Posterior cingulate gyrus (tissue), 11 donors: ENCODE measurements at regions of chr13 and their contacts with region 1.

Region 1: DNA sequence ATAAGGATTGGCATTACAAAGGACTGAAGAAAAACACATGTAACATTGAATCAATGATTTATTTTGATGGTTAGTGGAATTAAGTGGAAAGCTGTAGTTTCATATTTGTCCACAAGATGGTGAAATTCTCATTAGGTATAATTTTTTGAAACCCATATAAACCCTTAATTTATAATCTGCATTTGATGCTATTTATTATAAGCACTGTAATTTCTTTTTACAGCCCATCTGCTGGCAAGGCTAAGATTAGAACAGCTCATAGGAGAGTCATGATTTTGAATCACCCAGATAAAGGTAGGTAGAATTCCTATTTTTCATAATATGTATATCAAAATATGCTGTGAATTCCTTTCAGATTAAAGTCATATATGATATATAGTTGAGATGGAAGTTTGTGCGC is 62.2 kb downstream of the DNAJC15 start:
- DNase-seq: no peak

Region 2: DNA sequence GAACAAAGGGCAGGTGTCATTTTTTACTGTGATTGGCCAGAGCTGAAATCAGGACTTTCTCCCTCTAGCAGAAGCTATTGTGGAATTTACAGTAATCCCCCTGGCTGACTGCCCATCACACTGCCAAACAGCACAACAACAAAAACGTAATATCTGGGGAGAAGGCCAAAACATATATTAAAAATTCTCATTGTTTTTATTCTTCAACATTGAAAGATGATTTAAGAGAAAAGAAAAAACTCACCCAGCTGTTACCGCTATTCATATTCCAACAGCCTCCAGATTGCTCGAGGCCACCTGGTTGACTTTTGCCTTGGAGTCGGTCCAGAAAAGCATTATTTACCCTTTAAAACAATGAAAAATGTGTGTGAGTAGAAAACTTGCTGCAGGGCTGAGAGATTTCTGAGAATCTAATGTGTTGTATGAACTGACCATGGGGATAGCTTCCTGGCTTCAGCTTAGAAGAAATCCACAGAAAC is 190.7 kb before region 1 on chr13:
- intact Hi-C with region 1: no loop called
- DNase-seq: no peak

Region 3: DNA sequence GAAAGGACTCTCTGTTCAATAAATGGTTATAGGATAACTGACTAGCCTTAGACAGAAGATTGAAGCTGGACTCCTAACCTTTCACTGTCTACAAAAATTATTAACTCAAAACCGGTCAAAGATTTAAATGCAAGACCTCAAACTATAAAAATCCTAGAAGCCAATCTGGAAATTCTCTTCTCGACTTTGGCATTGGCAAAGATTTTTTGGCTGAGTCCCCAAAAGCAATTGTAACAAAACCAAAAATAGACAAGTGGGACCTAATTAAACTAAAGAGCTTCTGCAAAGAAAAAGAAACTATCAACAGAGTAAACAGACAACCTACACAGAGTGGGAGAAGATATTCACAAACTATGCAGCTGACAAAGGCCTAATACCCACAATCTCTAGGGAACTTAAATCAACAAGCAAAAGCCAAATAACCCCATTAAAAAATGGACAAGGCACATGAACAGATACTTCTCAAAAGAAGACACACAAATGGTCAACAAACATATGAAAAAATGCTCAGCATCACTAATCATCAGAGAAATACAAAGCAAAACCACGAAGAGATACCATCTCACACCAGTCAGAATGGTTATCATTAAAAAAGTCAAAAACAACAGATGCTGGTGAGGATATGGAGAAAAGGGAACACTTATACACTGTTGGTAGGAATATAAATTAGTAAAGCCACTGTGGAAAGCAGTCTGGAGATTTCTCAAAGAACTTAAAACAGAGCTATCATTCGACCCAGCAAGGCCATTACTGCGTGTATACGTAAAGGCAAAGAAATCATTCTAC is 204.1 kb after region 1 on chr13:
- intact Hi-C with region 1: loop called (anchors 10 kb)
- DNase-seq: no peak